K562 (cell line): ENCODE measurements at regions of chr5 and their contacts with region 1.

Region 1: DNA sequence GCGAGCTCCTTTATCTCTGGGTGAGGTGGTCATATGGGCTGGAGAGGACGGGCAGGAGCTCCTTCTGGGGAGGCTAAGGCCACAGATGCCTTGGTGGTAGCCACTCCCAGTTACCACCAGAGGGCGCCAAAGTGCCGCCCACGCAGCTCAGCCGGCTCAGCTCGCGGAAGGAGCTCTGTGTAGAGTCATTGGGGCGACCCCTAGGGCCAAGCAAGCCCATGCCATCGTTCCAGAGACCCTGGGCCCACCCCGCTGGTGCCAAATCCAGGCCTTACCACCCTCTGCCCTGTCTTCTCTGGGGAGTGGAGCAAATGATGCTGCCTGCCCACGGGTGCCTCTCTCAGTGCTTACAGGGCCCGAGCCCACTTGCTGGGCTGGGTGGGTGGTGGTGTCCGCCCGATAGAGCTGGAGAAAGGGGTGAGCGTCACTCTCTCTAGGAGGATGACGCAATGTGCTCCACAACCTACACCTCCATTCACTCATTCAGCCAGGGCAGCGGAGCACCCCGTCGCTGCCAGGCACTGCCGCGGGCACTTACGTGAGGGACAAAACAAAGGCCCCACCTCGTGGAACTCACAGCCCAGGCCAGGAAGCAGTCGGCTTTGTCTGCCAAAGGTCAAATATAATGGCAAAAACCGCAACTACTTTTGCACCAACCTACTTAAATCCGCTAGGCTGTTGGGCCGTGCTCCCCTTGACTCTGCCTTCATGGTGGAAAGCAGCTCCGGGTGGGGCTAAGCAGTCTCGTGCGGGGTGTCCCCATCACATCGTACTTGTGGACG is 13.8 kb downstream of the TSPAN17 start:
- DNase-seq: peak; percentile 89 to 92 (median 90)
- ATAC-seq: peak; percentile 96
- H3K4me3 ChIP-seq: no peak overlapping the region
- H3K27ac ChIP-seq: no peak overlapping the region
- H3K4me1 ChIP-seq: peaks cover 0 to 24% of the 10 kb centered on the region in 2 experiments; a peak in 2 of 5 replicates
- H3K27me3 ChIP-seq: peaks cover 20 to 47% of the 10 kb centered on the region in 2 experiments
- CTCF ChIP-seq: peak; percentile 94 to 98 (median 96)
- EP300 ChIP-seq: no peak
- POLR2A ChIP-seq: no peak
- RAD21 ChIP-seq: peak; percentile 87 to 97

Region 2: GRCh38 chr5:176647030-176647866 is 13.8 kb before region 1 on chr5 and contains the start of gene TSPAN17:
- CTCF ChIA-PET with region 1: no interaction called
- POLR2A ChIA-PET with region 1: interaction called, 10 read pairs
- in situ Hi-C with region 1: no loop called
- intact Hi-C with region 1: no loop called
- DNase-seq: peak; percentile 99
- ATAC-seq: peak; percentile 94
- H3K4me3 ChIP-seq: peak within 1 kb of the TSS; percentile 73
- H3K27ac ChIP-seq: peak within 1 kb of the TSS; percentile 78
- H3K4me1 ChIP-seq: peaks cover 50 to 86% of the 10 kb centered on the region in 2 experiments
- H3K27me3 ChIP-seq: no peaks in the 10 kb centered on the region
- CTCF ChIP-seq: peak; percentile 31 to 59 (median 54); a peak in 3 of 6 replicates
- EP300 ChIP-seq: no peak
- POLR2A ChIP-seq: peak; percentile 89
- RAD21 ChIP-seq: peak; percentile 60 to 65
- polyA plus RNA-seq, gene TSPAN17: 0.73 to 2.9 TPM

Region 3: GRCh38 chr5:176803940-176804498 is 143.0 kb after region 1 on chr5:
- CTCF ChIA-PET with region 1: no interaction called
- POLR2A ChIA-PET with region 1: no interaction called
- in situ Hi-C with region 1: no loop called
- intact Hi-C with region 1: loop called (anchors 10 kb)
- DNase-seq: peak in 3 of 4 experiments; percentile 50 to 60 (median 50)
- ATAC-seq: peak; percentile 78
- H3K4me3 ChIP-seq: no peak overlapping the region
- H3K27ac ChIP-seq: no peak overlapping the region
- H3K4me1 ChIP-seq: no peaks in the 10 kb centered on the region
- H3K27me3 ChIP-seq: peaks cover 4 to 33% of the 10 kb centered on the region in 2 experiments; a peak in 4 of 5 replicates
- CTCF ChIP-seq: no peak
- EP300 ChIP-seq: no peak
- POLR2A ChIP-seq: no peak
- RAD21 ChIP-seq: no peak

Region 4: DNA sequence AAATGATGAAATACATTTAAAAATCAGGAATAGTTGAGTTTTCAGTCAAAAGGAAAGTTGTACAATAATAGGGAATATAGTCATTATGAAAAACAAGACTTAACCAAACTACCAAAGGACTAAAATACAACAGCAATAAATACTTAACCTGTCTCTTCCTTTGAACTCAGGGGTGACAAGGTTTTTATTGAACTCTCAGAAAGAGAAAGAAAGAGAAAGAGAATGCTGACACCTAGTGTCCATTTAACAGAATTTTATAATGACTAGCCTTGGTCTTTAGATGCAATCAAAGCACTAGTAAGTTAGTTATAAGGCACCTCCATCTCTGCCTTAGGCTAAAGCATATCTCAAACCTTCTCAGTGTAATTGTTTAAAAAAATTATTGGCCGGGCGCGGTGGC is 298.0 kb after region 1 on chr5:
- CTCF ChIA-PET with region 1: interaction called, 8 read pairs
- POLR2A ChIA-PET with region 1: interaction called, 3 read pairs
- in situ Hi-C with region 1: loop called (anchors 10 kb)
- intact Hi-C with region 1: loop called (anchors 2 kb)
- DNase-seq: peak; percentile 36 to 54 (median 43)
- ATAC-seq: peak; percentile 89
- H3K4me3 ChIP-seq: no peak overlapping the region
- H3K27ac ChIP-seq: no peak overlapping the region
- H3K4me1 ChIP-seq: no peaks in the 10 kb centered on the region
- H3K27me3 ChIP-seq: no peaks in the 10 kb centered on the region
- CTCF ChIP-seq: peak; percentile 34 to 70 (median 46); a peak in 4 of 6 replicates
- EP300 ChIP-seq: no peak
- POLR2A ChIP-seq: no peak
- RAD21 ChIP-seq: peak; percentile 41 to 70

Region 5: DNA sequence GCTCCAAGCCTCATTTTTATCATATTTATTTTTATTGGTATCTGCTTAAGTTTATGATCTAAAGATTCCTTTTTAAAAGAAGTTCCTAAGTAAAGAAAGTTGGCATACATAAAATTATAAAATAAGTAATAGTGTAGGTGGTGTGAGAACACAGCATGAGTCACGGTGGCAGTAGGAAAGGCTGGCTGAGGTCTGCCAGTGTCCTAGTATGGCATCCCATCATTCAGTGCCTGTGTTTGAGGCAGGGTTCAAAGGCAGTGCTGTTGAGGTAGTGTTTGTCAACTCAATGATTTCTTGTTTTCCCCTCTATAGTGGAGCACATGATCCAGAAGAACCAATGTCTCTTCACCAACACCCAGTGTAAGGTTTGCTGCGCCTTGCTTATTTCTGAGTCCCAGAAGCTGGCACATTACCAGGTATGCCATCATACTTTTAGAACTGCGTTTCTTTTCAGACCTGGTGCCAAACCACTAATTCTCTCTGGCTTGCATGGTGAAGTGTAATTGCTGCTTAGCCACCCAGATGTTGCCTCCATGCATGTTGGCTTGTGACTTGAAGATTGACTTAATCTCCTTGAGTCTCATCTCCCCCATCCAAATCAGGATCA is 379.9 kb after region 1 on chr5:
- CTCF ChIA-PET with region 1: no interaction called
- POLR2A ChIA-PET with region 1: no interaction called
- in situ Hi-C with region 1: no loop called
- intact Hi-C with region 1: no loop called
- DNase-seq: no peak
- ATAC-seq: no peak
- H3K4me3 ChIP-seq: no peak overlapping the region
- H3K27ac ChIP-seq: no peak overlapping the region
- H3K4me1 ChIP-seq: no peaks in the 10 kb centered on the region; a peak in 1 of 5 replicates
- H3K27me3 ChIP-seq: no peaks in the 10 kb centered on the region
- CTCF ChIP-seq: no peak
- EP300 ChIP-seq: no peak
- POLR2A ChIP-seq: no peak
- RAD21 ChIP-seq: no peak